GM10248 (cell line): ENCODE measurements at regions of chr9 and their contacts with region 1.

Region 1: GRCh38 chr9:98775831-98776441 is 20.4 kb downstream of the ANKS6 start:
- DNase-seq: peak; percentile 77
- CTCF ChIP-seq: peak; percentile 77

Region 2: DNA sequence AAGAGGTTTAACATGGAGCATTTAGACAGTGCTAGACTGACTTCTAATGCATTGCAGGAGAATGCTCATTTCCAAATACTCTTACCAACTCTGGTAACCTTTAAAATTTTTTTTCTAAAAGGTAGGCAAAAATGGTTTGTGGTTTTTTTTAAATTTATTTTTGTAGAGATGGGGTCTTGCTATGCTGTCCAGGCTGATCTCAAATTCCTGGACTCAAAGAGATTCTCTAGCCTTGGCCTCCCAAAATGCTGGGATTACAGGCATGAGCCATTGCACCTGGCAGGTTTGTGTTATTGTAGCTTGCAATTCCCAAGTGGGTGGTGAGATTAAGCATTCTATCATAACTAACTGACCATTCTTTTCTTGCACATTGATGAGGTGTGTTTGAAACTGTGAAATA is 477.5 kb before region 1 on chr9:
- CTCF ChIA-PET with region 1: interaction called, 10 read pairs
- POLR2A ChIA-PET with region 1: no interaction called
- DNase-seq: no peak
- CTCF ChIP-seq: no peak

Region 3: DNA sequence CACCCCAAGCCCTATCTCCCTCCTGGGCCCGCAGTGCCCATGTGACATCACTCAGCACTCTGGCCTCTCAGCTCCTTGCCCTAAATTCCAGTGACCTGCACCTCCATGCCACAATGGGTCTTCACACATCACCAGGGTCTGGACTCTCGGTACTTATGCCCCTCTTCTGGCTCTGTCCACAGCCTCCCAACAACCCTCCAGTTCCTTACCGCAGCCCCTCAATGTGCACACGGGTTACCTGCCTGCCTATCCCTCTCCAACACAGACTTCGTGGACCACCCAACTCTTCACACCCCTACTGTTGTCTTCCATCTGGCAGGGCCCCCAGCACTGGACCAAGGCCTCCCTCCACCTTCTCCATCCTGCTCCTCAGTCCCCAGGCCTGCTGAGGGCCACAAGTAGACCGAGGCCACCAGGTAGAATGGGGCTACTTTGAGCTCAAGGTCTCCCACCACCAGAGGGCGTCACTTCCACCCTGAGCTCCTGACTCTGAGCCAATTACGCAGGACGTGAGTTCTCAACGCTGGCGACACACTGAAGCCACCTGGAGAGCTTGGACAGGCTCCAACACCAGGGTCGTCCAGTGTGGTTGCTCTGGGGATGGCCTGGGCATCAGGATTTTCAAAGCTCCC is 239.3 kb before region 1 on chr9:
- CTCF ChIA-PET with region 1: interaction called, 90 read pairs
- POLR2A ChIA-PET with region 1: no interaction called
- DNase-seq: peak; percentile 59
- CTCF ChIP-seq: peak; percentile 58

Region 4: GRCh38 chr9:98597236-98597771 is 178.6 kb before region 1 on chr9:
- CTCF ChIA-PET with region 1: no interaction called
- POLR2A ChIA-PET with region 1: no interaction called
- DNase-seq: no peak
- CTCF ChIP-seq: no peak

Region 5: DNA sequence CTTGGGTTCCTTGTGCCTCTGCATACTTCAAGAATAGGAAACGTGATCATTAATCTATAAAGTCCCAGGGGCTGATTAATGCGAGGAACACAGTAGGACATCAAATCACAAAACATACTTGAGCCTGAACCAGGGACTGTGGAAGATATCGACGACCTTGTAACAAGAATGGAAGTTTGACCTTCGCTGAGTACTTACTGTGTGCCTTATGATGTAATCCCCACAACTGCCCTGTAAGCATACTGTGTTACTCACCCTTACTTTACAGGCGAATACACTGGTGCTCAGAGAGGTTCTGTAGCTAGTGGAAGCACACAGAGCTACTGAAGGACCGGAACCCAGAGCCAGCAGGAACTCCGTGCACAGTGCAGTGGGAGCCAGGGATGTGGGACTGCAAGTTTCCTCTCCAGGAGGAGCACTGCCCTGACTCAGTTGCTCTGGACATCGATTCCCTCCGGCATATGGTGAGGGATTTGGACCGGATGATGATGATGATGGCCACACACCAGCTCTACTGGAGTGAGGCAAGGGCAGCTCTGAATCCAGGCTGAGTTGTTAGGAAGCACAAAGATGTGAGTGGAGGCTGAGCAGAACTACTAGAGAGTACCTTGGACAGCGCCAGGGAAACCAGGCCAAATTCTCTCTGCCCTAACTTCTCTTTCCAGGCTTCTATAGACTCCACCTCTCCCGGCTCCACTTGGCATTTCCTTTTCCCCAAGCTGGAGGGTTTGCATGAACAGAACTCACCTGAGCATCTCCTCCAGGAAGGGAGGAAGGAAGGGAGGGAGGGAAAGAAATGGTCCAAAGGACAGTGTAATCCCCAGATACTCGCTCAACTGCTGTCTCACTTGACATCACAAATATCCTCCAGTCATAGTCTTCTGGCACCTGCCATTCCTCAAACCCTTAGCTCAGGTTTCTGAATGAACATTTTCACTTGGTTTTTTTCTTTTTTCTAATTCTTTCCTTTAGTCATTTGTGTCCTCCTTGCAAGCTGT is 65.7 kb before region 1 on chr9:
- CTCF ChIA-PET with region 1: no interaction called
- POLR2A ChIA-PET with region 1: no interaction called
- DNase-seq: no peak
- CTCF ChIP-seq: no peak

Region 6: DNA sequence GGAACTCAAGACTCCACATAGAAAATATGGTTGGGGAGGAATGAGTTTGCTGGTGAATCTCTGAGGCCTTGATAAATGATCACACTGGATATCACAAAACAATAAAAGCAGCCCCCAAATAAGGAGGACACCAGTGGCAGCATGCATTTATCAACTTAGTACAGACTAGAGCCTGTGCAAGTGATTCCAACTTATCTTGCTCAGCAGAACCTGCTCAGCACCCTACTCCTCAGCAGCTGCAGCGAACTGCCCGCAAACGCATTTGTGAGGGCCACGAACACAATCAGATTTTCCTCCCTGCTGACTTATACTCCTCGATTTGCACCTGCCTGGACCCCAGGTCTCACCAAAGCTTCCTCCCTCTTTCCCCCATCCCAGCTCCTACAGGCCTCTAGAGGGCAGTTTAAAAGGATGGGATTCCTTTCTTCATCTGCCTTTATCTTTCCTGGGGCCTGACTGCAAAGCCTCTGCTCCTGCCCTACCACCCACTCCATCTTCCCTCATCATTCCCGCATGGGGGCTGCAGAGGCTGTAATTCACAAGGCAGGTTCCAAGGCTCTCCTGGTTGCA is 20.8 kb before region 1 on chr9:
- CTCF ChIA-PET with region 1: interaction called, 54 read pairs
- POLR2A ChIA-PET with region 1: no interaction called
- DNase-seq: no peak
- CTCF ChIP-seq: no peak

Region 7: GRCh38 chr9:98796364-98797101 is 20.6 kb after region 1 on chr9 and contains the start of gene ANKS6:
- CTCF ChIA-PET with region 1: interaction called, 50 read pairs
- POLR2A ChIA-PET with region 1: no interaction called
- DNase-seq: peak; percentile 88
- CTCF ChIP-seq: peak; percentile 80